Kidney (tissue), 22 donors: ENCODE measurements at regions of chr13 and their contacts with region 1.

Region 1: GRCh38 chr13:27362064-27362883 is 62.1 kb upstream of the GTF3A start:
- DNase-seq: peak; percentile 92 to 94 (median 92)
- H3K4me3 ChIP-seq: peak overlapping the region; percentile 58 to 78 (median 59)
- H3K27ac ChIP-seq: no peak overlapping the region
- H3K4me1 ChIP-seq: peaks cover 0 to 8% (median 0%) of the 10 kb centered on the region in 3 donors
- H3K27me3 ChIP-seq: no peaks in the 10 kb centered on the region
- CTCF ChIP-seq: peak; percentile 93

Region 2: GRCh38 chr13:26895081-26895807 is 467.0 kb before region 1 on chr13:
- intact Hi-C with region 1: no loop called
- DNase-seq: peak in 1 of 5 donors; percentile 27
- H3K4me3 ChIP-seq: no peak overlapping the region
- H3K27ac ChIP-seq: no peak overlapping the region
- H3K4me1 ChIP-seq: no peaks in the 10 kb centered on the region
- H3K27me3 ChIP-seq: no peaks in the 10 kb centered on the region
- CTCF ChIP-seq: no peak

Region 3: GRCh38 chr13:26985285-26985878 is 376.9 kb before region 1 on chr13:
- intact Hi-C with region 1: loop called (anchors 5 kb)
- DNase-seq: peak in 3 of 5 donors; percentile 77 to 90 (median 85)
- H3K4me3 ChIP-seq: no peak overlapping the region
- H3K27ac ChIP-seq: no peak overlapping the region
- H3K4me1 ChIP-seq: peaks cover 0 to 6% (median 5%) of the 10 kb centered on the region in 3 donors
- H3K27me3 ChIP-seq: no peaks in the 10 kb centered on the region
- CTCF ChIP-seq: peak; percentile 86

Region 4: DNA sequence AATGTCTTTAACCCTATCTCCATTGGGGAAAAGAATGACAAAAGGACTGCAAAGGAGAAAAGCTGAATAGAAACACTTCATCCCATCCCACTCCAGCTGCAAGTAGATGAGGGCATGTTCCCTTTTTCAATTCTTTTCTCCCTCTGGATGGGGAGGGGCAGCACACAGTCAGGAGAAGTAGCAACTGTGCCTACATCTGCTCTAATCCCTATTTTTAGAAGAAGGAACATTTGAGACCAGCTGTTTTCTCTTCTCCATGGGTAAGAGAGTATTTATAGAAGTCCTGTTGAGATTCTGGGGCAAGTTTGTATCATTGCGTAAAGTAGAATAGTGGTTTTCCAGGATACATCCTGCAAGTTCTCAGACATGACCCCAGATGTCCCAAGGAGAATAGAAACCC is 52.8 kb after region 1 on chr13:
- intact Hi-C with region 1: no loop called
- DNase-seq: no peak
- H3K4me3 ChIP-seq: no peak overlapping the region
- H3K27ac ChIP-seq: no peak overlapping the region
- H3K4me1 ChIP-seq: no peaks in the 10 kb centered on the region
- H3K27me3 ChIP-seq: no peaks in the 10 kb centered on the region
- CTCF ChIP-seq: no peak

Region 5: GRCh38 chr13:27980280-27980998 is 618.2 kb after region 1 on chr13:
- intact Hi-C with region 1: loop called (anchors 10 kb)
- DNase-seq: peak in 1 of 5 donors; percentile 51
- H3K4me3 ChIP-seq: peak overlapping the region in 1 of 3 donors; percentile 49
- H3K27ac ChIP-seq: no peak overlapping the region
- H3K4me1 ChIP-seq: peaks cover 0 to 2% (median 0%) of the 10 kb centered on the region in 3 donors
- H3K27me3 ChIP-seq: peaks cover 61% of the 10 kb centered on the region
- CTCF ChIP-seq: no peak